CD8-positive, alpha-beta T cell (primary cell): ENCODE measurements at regions of chr14 and their contacts with region 1.

Region 1: DNA sequence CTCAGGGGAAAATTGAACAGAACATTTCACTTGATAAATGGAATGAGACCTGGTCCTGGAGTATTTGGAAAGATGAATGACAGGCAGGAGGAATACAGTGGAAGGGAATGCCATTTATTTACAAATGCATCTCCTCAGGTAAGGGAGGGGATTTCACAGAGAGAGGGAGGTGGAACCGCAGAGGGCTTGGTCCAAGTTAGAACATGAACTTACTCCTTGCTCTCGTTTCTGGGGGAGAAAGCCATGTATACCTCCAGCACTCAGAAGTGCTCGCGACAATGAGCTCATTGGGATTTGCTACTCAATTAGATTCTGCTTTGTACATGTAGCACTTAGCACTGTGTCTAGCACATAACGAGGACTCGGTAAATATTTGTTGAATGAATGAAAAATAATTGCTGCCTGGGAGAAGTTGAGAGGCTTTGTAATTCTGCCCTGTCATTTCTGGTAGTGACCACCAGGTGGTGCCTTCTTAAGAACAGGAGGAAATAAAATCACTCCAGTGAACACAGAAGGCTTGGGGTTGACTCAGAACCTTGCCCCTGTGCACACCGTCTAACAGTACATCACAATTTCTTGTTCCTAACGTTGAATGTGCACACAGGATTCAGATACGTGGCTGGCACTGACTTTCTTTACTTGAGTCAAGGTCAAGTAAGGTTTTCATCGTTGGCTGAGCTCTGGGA is 91.6 kb downstream of the RGS6 start:
- DNase-seq: peak in 7 of 9 experiments; percentile 3 to 53 (median 22)
- ATAC-seq: no peak
- H3K4me3 ChIP-seq: no peak overlapping the region
- H3K4me3 Mint-ChIP-seq: no peak overlapping the region
- H3K27ac ChIP-seq: no peak overlapping the region
- H3K27ac Mint-ChIP-seq: no peak overlapping the region
- H3K4me1 ChIP-seq: no peaks in the 10 kb centered on the region
- H3K4me1 Mint-ChIP-seq: no peaks in the 10 kb centered on the region
- H3K27me3 ChIP-seq: no peaks in the 10 kb centered on the region
- H3K27me3 Mint-ChIP-seq: peaks cover 25% of the 10 kb centered on the region
- CTCF ChIP-seq: peak; percentile 49

Region 2: GRCh38 chr14:72420725-72421474 is 397.0 kb after region 1 on chr14:
- CTCF ChIA-PET with region 1: no interaction called
- POLR2A ChIA-PET with region 1: no interaction called
- intact Hi-C with region 1: loop called in 1 of 2 experiments (anchors 2 kb)
- DNase-seq: peak; percentile 34 to 69 (median 54)
- ATAC-seq: no peak
- H3K4me3 ChIP-seq: no peak overlapping the region
- H3K4me3 Mint-ChIP-seq: no peak overlapping the region
- H3K27ac ChIP-seq: no peak overlapping the region
- H3K27ac Mint-ChIP-seq: no peak overlapping the region
- H3K4me1 ChIP-seq: no peaks in the 10 kb centered on the region
- H3K4me1 Mint-ChIP-seq: peaks cover 3% of the 10 kb centered on the region
- H3K27me3 ChIP-seq: peaks cover 0 to 3% of the 10 kb centered on the region in 2 experiments
- H3K27me3 Mint-ChIP-seq: peaks cover 21% of the 10 kb centered on the region
- CTCF ChIP-seq: peak; percentile 74